ENCODE measurements at regions of chr5 and their contacts with region 1.

Region 1: DNA sequence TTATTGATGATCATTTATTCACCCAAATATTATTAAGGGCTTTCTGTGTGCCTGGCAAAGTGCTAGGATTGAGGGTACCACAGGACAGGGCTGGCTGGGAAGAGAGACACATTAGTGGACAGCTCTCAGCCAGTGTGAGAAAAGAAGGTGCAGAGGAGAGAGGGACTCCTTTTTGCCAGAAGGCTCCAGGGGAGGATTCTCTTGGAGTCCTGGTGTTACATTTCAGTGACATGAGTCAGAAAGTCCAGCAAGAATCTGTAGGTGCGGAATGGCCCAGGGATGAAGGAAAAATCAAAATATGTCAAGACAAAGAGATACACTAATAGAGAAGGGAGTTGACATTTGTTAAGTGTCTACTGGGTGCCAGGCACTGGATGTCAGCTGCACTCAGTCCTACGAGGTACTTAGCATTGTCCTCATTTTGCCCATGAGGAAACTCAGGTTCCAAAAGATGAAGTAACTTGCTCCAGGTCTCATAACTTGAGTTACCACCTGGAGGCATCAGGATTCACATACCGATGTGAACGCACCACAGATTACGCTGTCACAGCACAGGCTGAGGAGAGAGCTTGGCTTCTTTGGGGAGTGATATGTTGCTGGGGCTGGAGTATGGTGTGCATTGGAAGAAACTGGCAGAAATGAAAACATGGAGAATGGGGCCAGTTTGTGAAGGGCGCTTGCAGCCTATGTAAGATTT is 60.5 kb downstream of the RASGRF2 start:
- DNase-seq: no peak
- ATAC-seq: no peak
- H3K4me3 Mint-ChIP-seq: no peak overlapping the region
- H3K27ac Mint-ChIP-seq: no peak overlapping the region
- H3K4me1 Mint-ChIP-seq: peaks cover 92% of the 10 kb centered on the region
- H3K27me3 Mint-ChIP-seq: no peaks in the 10 kb centered on the region
- CTCF ChIP-seq: no peak

Region 2: GRCh38 chr5:81006947-81007636 is 13.5 kb before region 1 on chr5:
- CTCF ChIA-PET with region 1: interaction called, 7 read pairs
- POLR2A ChIA-PET with region 1: interaction called, 41 read pairs
- intact Hi-C with region 1: no loop called
- DNase-seq: peak; percentile 74
- ATAC-seq: peak; percentile 83
- H3K4me3 Mint-ChIP-seq: peak overlapping the region; percentile 80
- H3K27ac Mint-ChIP-seq: peak overlapping the region; percentile 98
- H3K4me1 Mint-ChIP-seq: peaks cover 75% of the 10 kb centered on the region
- H3K27me3 Mint-ChIP-seq: no peaks in the 10 kb centered on the region
- CTCF ChIP-seq: no peak

Measured in activated CD8-positive, alpha-beta T cell treated with anti-CD3 and anti-CD28 coated beads for 36 hours (primary cell).